PC-3 (cell line): ENCODE measurements at regions of chr11 and their contacts with region 1.

Region 1: DNA sequence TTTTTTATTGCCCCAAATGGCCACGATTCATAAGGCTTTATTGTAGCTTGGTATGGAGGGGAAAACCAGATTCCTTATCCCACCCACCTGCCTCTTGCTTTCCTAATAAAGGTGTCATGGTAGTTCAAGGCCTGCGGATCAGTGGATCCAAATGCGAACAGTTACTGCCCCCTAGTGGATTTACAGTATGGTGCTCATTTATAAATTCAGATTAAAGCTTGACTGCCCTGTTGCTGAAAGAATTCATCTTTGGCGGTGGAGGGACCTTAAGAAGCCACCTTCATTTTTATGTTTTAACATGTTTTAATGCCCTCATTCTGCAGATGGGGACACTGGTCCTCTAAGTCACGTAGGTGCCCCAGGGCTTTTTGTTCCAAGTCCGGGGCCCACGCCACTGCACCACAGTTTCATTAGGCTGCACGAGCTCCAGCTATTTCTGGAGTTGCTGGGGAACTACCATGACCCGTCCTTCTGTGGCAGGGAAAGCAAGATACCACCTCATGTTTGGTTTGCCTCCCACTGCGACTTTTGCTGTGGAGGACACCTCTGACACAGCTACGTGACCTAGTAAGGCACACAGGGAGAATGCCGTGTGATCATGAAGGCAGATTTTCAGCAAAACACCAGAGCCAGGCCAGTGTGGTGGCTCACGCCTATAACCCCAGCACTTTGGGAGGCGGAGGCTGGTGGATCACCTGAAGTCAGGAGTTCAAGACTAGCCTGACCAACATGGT is 15.6 kb upstream of the INCENP start:
- DNase-seq: peak; percentile 85
- ATAC-seq: peak; percentile 67
- H3K4me3 ChIP-seq: no peak overlapping the region
- H3K27ac ChIP-seq: no peak overlapping the region
- H3K4me1 ChIP-seq: peaks cover 12% of the 10 kb centered on the region
- H3K27me3 ChIP-seq: no peaks in the 10 kb centered on the region
- CTCF ChIP-seq: peak; percentile 96

Region 2: DNA sequence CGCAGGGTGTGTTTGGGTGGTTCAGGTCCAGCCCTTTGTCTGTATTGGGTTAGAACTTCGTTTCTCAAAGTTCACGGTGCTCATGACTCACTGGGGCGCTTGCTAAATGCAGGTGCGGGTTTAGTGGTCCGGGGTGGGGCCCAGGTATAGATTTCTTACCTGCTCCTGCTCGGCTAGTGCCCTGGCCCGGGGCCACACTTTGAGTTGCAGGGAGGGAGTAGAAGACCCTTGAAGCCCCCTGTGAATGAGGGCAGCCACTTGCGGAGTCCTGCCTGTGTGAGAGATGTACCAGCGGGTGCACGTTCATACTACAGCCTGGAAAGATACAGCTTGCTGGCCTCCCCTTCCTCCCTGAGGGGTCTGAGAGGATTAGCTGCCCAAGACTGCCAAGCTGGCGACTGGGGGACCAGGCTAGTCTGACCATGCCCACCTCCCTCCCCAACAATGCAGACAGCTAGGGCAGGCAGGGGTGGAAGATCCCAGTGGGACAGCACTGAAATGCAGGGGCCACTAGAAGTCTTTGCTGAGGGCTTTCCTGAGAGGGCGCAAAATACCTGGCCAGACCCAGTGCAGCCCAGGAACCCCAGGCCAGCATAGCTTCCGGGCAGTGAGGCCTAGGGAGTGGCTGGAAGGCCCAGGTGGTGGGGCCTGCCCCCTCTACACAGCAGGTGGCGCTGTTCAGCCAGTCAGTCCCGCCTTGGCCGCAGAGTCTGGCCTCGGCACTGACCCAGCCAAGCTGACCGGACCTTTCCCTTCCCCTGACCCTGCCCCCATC is 360.8 kb before region 1 on chr11:
- CTCF ChIA-PET with region 1: interaction called, 6 read pairs
- POLR2A ChIA-PET with region 1: no interaction called
- intact Hi-C with region 1: loop called (anchors 5 kb)
- DNase-seq: peak; percentile 78
- ATAC-seq: peak; percentile 89
- H3K4me3 ChIP-seq: no peak overlapping the region
- H3K27ac ChIP-seq: no peak overlapping the region
- H3K4me1 ChIP-seq: peaks cover 11% of the 10 kb centered on the region; the same call in 1 of the 2 replicates
- H3K27me3 ChIP-seq: no peaks in the 10 kb centered on the region
- CTCF ChIP-seq: peak; percentile 96

Region 3: DNA sequence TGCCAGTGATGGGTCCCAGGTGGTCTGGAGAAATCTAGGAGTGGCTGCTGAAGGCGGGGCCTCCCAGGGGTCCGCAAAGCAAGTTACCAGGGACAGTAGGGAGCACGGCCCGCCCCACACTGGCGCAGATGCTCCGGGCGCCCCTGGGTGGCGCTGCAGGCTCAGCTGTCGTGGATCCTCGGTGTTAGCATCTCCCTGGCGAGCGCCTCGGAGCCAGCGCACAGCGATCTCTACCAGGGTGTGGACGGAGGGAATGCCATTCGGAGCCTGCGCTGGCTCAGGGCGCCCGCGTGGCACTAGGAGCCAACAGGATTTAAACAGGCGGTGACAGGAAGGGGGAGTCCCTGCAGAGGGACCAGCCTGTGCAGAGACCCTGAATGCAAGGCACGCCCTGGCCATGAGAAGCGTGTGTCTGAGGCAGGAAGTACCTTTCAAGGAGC is 237.0 kb before region 1 on chr11:
- CTCF ChIA-PET with region 1: interaction called, 12 read pairs
- POLR2A ChIA-PET with region 1: no interaction called
- intact Hi-C with region 1: loop called (anchors 1 kb)
- DNase-seq: peak; percentile 87
- ATAC-seq: peak; percentile 93
- H3K4me3 ChIP-seq: peak overlapping the region; percentile 48
- H3K27ac ChIP-seq: no peak overlapping the region
- H3K4me1 ChIP-seq: peaks cover 3% of the 10 kb centered on the region; the same call in 1 of the 2 replicates
- H3K27me3 ChIP-seq: no peaks in the 10 kb centered on the region
- CTCF ChIP-seq: peak; percentile 97

Region 4: GRCh38 chr11:61899146-61899841 is 208.9 kb before region 1 on chr11:
- CTCF ChIA-PET with region 1: interaction called, 22 read pairs
- POLR2A ChIA-PET with region 1: interaction called, 9 read pairs
- intact Hi-C with region 1: loop called (anchors 1 kb)
- DNase-seq: peak; percentile 94
- ATAC-seq: peak; percentile 85
- H3K4me3 ChIP-seq: no peak overlapping the region
- H3K27ac ChIP-seq: no peak overlapping the region
- H3K4me1 ChIP-seq: no peaks in the 10 kb centered on the region
- H3K27me3 ChIP-seq: no peaks in the 10 kb centered on the region
- CTCF ChIP-seq: peak; percentile 99

Region 5: DNA sequence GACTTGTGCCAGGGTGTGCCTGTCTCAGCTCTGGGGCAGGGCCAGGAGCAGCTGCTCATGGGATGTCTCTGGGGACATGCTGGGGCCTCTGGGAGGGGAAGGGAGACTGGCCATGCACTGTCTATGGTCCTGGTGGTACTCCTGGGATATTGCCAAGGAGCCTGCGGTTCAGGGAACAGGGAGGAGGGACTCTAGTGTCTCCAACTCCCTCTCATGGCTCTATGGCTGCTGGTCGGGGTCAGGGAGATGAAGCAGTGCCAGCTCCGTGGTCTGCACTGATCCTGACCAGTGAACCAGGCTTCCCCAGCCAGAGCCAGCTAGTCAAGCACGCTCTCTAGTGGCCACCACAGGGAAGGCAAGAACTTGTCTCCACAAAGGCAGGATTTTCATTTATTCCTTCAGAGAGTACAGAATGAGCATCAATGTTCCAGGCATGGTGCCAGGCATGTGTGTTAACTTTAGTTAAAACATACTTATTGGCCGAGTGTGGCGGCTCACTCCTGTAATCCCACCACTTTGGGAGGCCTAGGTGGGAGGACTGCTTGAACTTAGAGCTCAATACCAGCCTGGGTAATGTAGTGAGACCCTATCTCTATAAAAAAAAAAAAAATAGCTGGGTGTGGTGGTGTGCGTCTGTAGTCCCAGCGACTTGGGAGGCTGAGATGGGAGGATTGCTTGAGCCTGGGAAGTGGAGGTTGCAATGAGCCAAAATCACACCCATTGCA is 160.5 kb before region 1 on chr11:
- CTCF ChIA-PET with region 1: interaction called, 5 read pairs
- POLR2A ChIA-PET with region 1: no interaction called
- intact Hi-C with region 1: loop called (anchors 2 kb)
- DNase-seq: peak; percentile 92
- ATAC-seq: peak; percentile 85
- H3K4me3 ChIP-seq: no peak overlapping the region
- H3K27ac ChIP-seq: no peak overlapping the region
- H3K4me1 ChIP-seq: peaks cover 7% of the 10 kb centered on the region; the same call in 1 of the 2 replicates
- H3K27me3 ChIP-seq: no peaks in the 10 kb centered on the region
- CTCF ChIP-seq: peak; percentile 97

Region 6: DNA sequence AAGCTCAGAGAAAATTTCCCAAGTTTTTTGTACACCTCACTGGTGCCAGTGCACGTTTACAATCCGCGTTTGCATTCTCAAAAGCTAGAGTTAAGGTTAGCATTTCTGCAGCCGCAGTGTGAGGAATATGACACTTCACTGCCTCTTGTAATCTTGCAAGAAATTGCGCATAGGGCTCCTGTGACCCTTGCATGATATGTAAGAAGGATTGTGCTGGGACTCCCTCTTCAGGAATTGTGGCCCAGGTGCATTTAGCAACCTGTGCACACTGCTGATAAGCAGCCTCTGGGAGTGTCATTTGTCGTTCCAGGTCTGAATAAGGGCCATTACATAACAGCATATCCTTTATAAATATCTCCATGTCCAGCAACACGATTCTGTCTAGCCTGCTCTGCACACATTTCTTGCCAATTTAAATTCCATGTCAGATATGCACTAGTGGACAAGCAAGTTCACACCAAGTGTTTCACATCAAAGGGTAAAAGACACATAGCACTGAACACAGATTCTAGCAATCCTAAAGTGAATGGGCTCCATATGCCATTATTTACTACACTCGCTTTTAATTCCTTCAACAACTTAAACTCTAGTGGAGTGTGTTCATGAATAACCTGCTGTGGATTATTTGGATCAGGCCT is 53.6 kb before region 1 on chr11:
- CTCF ChIA-PET with region 1: interaction called, 3 read pairs
- POLR2A ChIA-PET with region 1: no interaction called
- intact Hi-C with region 1: loop called (anchors 2 kb)
- DNase-seq: peak; percentile 95
- ATAC-seq: peak; percentile 87
- H3K4me3 ChIP-seq: no peak overlapping the region
- H3K27ac ChIP-seq: peak overlapping the region; percentile 64
- H3K4me1 ChIP-seq: peaks cover 36% of the 10 kb centered on the region
- H3K27me3 ChIP-seq: no peaks in the 10 kb centered on the region
- CTCF ChIP-seq: peak; percentile 93

Region 7: DNA sequence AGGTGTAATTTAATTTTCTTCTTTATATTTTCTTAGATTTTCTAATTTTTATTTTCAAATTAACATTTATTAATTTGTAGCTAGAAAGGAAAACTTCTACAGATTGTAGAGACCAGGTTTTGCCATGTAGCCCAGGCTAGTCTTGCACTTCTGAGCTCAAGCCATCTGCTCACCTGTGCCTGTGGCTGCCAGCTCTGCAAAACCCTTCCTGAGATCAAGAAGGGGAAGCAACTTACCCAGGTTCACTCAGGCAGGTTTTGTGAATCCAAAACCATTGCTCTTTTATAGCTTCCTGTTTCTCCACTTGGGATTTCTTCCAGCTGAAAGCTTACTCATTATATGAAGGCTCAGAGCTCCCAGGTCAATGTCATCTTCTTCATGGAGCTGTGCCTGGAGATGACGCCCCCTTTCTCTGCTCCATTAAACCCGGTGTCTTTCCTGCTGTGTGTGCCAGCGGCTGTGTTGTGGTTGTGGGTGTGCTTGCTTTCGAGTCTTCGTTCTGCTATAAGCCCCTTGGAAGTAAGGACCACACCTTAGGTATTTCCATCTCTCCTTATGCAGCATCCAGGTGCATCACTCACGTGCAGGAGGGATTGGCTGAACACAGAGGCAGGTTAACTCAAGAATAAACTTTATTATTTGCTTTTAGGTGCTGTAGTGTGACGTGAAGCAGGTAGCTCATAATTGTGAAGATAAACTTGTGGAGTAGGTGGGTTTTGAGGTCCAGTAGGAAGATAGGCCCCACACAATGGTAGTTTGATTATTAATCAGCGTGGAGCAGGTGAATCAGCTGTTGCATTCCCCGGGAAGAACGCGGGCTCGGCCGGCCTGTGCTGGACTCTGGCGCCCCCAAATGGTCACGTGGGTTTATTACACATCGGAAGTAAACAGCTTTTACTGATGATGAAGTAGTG is 26.5 kb before region 1 on chr11:
- CTCF ChIA-PET with region 1: interaction called, 30 read pairs
- POLR2A ChIA-PET with region 1: no interaction called
- intact Hi-C with region 1: no loop called
- DNase-seq: peak; percentile 89
- ATAC-seq: peak; percentile 86
- H3K4me3 ChIP-seq: peak overlapping the region; percentile 21; the same call in 1 of the 2 replicates
- H3K27ac ChIP-seq: no peak overlapping the region
- H3K4me1 ChIP-seq: peaks cover 11% of the 10 kb centered on the region
- H3K27me3 ChIP-seq: no peaks in the 10 kb centered on the region
- CTCF ChIP-seq: peak; percentile 98

Region 8: DNA sequence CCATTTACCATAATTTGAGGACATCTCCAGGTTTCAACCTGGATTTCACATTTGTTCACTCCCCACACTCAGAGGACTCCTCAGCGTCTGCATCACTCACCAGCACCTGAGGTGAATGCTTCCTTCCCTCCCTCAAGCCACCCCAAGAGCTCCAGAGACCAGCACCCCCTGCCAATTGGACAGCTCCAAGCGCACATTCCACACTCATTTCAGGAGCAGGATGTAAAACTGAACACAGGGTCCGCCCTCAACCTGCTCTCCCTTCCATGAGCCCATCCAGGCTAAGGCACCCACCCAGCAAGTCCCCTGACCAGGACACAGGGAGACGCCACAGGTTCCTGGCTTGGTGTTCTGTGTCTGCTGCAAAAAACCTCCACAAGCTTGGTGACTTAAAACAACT is 85.8 kb after region 1 on chr11:
- CTCF ChIA-PET with region 1: no interaction called
- POLR2A ChIA-PET with region 1: no interaction called
- intact Hi-C with region 1: no loop called
- DNase-seq: peak; percentile 32
- ATAC-seq: no peak
- H3K4me3 ChIP-seq: no peak overlapping the region
- H3K27ac ChIP-seq: no peak overlapping the region
- H3K4me1 ChIP-seq: no peaks in the 10 kb centered on the region
- H3K27me3 ChIP-seq: peaks cover 79% of the 10 kb centered on the region
- CTCF ChIP-seq: no peak